WTC11 (cell line): ENCODE measurements at regions of chr17 and their contacts with region 1.

Region 1: GRCh38 chr17:3738562-3739295 is 15.0 kb downstream of the HASPIN start:
- DNase-seq: no peak
- ATAC-seq: peak; percentile 14; the same call in 1 of the 2 replicates
- H3K4me3 Mint-ChIP-seq: peak overlapping the region; percentile 45; the same call in 1 of the 2 replicates
- H3K27ac Mint-ChIP-seq: no peak overlapping the region
- H3K4me1 Mint-ChIP-seq: peaks cover 22% of the 10 kb centered on the region
- H3K27me3 Mint-ChIP-seq: no peaks in the 10 kb centered on the region
- CTCF ChIP-seq: no peak

Region 2: GRCh38 chr17:3683054-3683511 is 55.6 kb before region 1 on chr17:
- CTCF ChIA-PET with region 1: interaction called, 27 read pairs
- POLR2A ChIA-PET with region 1: no interaction called
- DNase-seq: peak; percentile 64
- ATAC-seq: peak; percentile 85
- H3K4me3 Mint-ChIP-seq: no peak overlapping the region
- H3K27ac Mint-ChIP-seq: no peak overlapping the region
- H3K4me1 Mint-ChIP-seq: 0 out of 2 replicates have a peak, but pooled peaks cover 5% of the 10 kb centered on the region
- H3K27me3 Mint-ChIP-seq: no peaks in the 10 kb centered on the region; the same call in none of the 2 replicates
- CTCF ChIP-seq: peak; percentile 98

Region 3: GRCh38 chr17:3754458-3755334 is 16.0 kb after region 1 on chr17:
- CTCF ChIA-PET with region 1: interaction called, 117 read pairs
- POLR2A ChIA-PET with region 1: interaction called, 3 read pairs
- DNase-seq: peak; percentile 100
- ATAC-seq: peak; percentile 88
- H3K4me3 Mint-ChIP-seq: peak overlapping the region; percentile 64
- H3K27ac Mint-ChIP-seq: no peak overlapping the region
- H3K4me1 Mint-ChIP-seq: peaks cover 15% of the 10 kb centered on the region
- H3K27me3 Mint-ChIP-seq: peaks cover 2% of the 10 kb centered on the region
- CTCF ChIP-seq: no peak

Region 4: DNA sequence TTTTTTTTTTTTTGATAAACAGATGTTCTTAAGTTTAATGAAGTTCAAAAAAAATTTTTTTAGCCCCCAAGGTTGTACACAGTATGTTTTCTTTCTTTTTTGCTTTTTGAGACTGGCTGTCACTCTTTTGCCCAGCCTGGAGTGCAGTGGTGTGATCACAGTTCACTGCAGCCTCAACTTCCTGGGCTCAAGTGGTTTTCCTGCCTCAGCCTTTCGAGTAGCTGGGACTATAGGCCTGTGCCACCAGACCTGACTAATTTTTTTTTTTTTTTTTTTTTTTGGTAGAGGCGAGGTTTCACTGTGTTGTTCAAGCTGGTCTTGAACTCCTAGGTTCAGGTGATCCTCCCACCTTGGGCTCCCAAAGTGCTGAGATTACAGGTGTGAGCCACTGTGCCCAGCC is 49.5 kb after region 1 on chr17:
- CTCF ChIA-PET with region 1: interaction called, 15 read pairs
- POLR2A ChIA-PET with region 1: no interaction called
- DNase-seq: no peak
- ATAC-seq: no peak
- H3K4me3 Mint-ChIP-seq: no peak overlapping the region
- H3K27ac Mint-ChIP-seq: no peak overlapping the region
- H3K4me1 Mint-ChIP-seq: 0 out of 2 replicates have a peak, but pooled peaks cover 4% of the 10 kb centered on the region
- H3K27me3 Mint-ChIP-seq: no peaks in the 10 kb centered on the region
- CTCF ChIP-seq: no peak

Region 5: GRCh38 chr17:3808701-3809100 is 70.0 kb after region 1 on chr17:
- CTCF ChIA-PET with region 1: interaction called, 35 read pairs
- POLR2A ChIA-PET with region 1: no interaction called
- DNase-seq: no peak
- ATAC-seq: no peak
- H3K4me3 Mint-ChIP-seq: no peak overlapping the region
- H3K27ac Mint-ChIP-seq: peak overlapping the region; percentile 75
- H3K4me1 Mint-ChIP-seq: no peaks in the 10 kb centered on the region
- H3K27me3 Mint-ChIP-seq: no peaks in the 10 kb centered on the region; the same call in 1 of the 2 replicates
- CTCF ChIP-seq: no peak

Region 6: DNA sequence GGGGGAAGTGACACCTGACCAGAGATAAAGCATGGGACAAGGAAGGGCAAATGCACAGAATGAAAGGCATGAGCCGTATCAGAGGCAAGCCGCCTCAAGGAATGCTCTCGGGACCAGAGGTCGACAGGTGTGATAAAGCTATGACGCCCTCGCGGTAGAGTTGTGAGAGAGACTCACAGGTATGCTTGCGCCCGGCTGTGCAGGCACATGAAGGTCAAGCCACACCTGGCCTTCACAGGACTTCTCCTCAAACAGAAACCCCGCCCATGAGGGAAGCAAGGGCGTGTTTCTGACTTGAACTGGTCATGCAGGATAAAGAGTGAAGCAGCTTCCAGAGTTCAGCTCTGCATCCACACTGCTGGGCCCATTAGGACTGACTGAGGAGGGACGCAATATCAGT is 99.5 kb after region 1 on chr17:
- CTCF ChIA-PET with region 1: interaction called, 73 read pairs
- POLR2A ChIA-PET with region 1: no interaction called
- DNase-seq: no peak
- ATAC-seq: no peak
- H3K4me3 Mint-ChIP-seq: no peak overlapping the region
- H3K27ac Mint-ChIP-seq: peak overlapping the region; percentile 63; the same call in 1 of the 2 replicates
- H3K4me1 Mint-ChIP-seq: no peaks in the 10 kb centered on the region
- H3K27me3 Mint-ChIP-seq: no peaks in the 10 kb centered on the region
- CTCF ChIP-seq: no peak

Region 7: DNA sequence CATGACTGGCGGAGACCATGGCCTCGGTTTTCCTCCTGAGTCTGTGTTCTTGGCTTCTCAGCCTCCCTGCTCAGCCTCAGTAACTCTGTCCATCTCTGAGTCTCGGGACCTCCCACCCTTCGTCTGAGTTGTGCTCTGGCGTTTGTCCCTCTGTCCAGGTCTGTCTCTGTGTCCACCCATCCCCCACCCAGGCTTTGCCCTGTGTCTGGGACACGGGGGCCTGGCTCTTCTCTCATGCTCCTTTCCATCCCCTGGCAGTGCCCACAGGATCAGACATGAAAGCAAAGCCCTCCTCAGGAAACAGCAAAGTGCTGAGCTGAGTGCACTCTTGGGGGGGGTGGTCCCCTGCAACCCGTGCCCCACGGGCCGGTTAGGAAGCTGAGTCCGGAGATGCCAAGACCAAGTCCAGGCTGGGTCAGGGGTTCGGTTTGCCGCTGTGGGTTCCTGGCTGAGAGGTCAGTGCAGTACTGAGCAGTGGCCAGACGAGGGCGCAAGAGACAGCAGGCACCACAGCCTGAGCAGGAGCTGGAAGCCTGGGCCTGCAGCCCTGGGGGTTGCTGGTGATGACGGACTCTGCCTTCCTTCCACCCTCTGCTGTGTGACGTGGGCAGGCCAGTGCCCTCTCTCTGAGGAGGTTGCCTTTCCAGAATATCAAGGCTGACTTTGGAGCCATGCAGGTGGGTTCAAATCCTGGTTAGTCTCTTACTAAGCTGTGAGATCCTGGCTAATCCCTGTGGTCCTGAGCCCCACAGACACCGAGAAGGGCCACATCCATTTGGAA is 175.0 kb after region 1 on chr17:
- CTCF ChIA-PET with region 1: interaction called, 20 read pairs
- POLR2A ChIA-PET with region 1: no interaction called
- DNase-seq: peak; percentile 91
- ATAC-seq: peak; percentile 92
- H3K4me3 Mint-ChIP-seq: no peak overlapping the region
- H3K27ac Mint-ChIP-seq: no peak overlapping the region
- H3K4me1 Mint-ChIP-seq: no peaks in the 10 kb centered on the region; the same call in 1 of the 2 replicates
- H3K27me3 Mint-ChIP-seq: peaks cover 3% of the 10 kb centered on the region; the same call in 1 of the 2 replicates
- CTCF ChIP-seq: peak; percentile 98